ENCODE measurements at regions of chr3 and their contacts with region 1.

Region 1: DNA sequence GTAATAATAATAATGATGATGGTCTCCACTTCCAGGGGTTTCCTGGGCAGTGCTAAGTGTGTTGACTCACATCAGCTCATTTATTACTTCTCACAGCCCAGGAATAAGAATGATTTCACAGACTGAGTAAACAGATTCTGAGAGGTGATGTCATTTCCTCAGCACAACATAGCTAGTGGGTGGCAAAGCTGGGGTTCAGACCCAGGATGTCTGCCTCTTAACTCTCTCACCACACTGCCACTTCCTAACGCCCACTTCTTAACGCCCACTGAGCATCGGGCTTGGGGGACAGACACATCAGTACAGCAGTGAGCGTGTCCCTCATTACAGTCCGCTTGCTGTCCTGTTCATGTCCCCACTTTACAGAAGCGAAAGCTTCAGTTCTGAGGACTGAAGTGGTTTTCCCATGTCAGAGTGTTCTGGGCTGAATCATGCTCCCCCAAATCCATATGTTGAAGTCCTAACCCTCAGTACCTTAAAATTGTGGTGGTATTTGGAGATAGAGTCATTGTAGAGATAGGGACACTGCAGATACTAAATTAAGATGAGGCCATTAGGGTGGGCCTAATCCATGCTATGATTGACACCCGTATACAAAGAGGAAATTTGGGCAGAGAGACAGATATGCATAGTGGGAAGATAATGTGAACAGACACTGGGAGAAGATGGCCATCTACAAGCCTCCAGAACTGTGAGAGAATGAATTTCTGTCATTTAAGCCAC is 68.0 kb downstream of the ATP2B2 start:
- DNase-seq: no peak
- ATAC-seq: peak in 1 of 2 donors; percentile 20
- H3K4me3 ChIP-seq: no peak overlapping the region
- H3K27ac ChIP-seq: peak overlapping the region; percentile 85 to 97 (median 94)
- H3K4me1 ChIP-seq: peaks cover 40 to 46% of the 10 kb centered on the region in 2 donors
- H3K27me3 ChIP-seq: no peaks in the 10 kb centered on the region
- CTCF ChIP-seq: no peak
- POLR2A ChIP-seq: no peak

Region 2: GRCh38 chr3:10344147-10344943 is 93.1 kb before region 1 on chr3:
- in situ Hi-C with region 1: no loop called
- intact Hi-C with region 1: no loop called
- DNase-seq: no peak
- ATAC-seq: peak; percentile 59 to 61
- H3K4me3 ChIP-seq: no peak overlapping the region
- H3K27ac ChIP-seq: no peak overlapping the region
- H3K4me1 ChIP-seq: peaks cover 4 to 9% of the 10 kb centered on the region in 2 donors
- H3K27me3 ChIP-seq: no peaks in the 10 kb centered on the region
- CTCF ChIP-seq: peak; percentile 79 to 95 (median 86)
- POLR2A ChIP-seq: no peak

Region 3: GRCh38 chr3:10377148-10377725 is 60.2 kb before region 1 on chr3:
- in situ Hi-C with region 1: no loop called
- intact Hi-C with region 1: loop called (anchors 5 kb)
- DNase-seq: peak; percentile 43 to 70
- ATAC-seq: peak; percentile 71 to 77
- H3K4me3 ChIP-seq: no peak overlapping the region
- H3K27ac ChIP-seq: peak overlapping the region; percentile 75 to 80 (median 78)
- H3K4me1 ChIP-seq: peaks cover 36 to 50% of the 10 kb centered on the region in 2 donors
- H3K27me3 ChIP-seq: no peaks in the 10 kb centered on the region
- CTCF ChIP-seq: no peak
- POLR2A ChIP-seq: no peak

Region 4: GRCh38 chr3:10551821-10552630 is 114.6 kb after region 1 on chr3:
- in situ Hi-C with region 1: no loop called
- intact Hi-C with region 1: loop called (anchors 10 kb)
- DNase-seq: peak; percentile 25 to 47
- ATAC-seq: peak; percentile 21 to 45
- H3K4me3 ChIP-seq: no peak overlapping the region
- H3K27ac ChIP-seq: peak overlapping the region; percentile 2 to 74 (median 72)
- H3K4me1 ChIP-seq: peaks cover 36% of the 10 kb centered on the region in 2 donors
- H3K27me3 ChIP-seq: no peaks in the 10 kb centered on the region
- CTCF ChIP-seq: no peak
- POLR2A ChIP-seq: no peak

Region 5: GRCh38 chr3:10722911-10723310 is 285.5 kb after region 1 on chr3:
- in situ Hi-C with region 1: no loop called
- intact Hi-C with region 1: no loop called
- DNase-seq: no peak
- ATAC-seq: no peak
- H3K4me3 ChIP-seq: no peak overlapping the region
- H3K27ac ChIP-seq: no peak overlapping the region
- H3K4me1 ChIP-seq: no peaks in the 10 kb centered on the region
- H3K27me3 ChIP-seq: no peaks in the 10 kb centered on the region
- CTCF ChIP-seq: no peak
- POLR2A ChIP-seq: no peak

Measured in gastrocnemius medialis (tissue), 4 donors.